Heart left ventricle (tissue), 16 donors: ENCODE measurements at regions of chr3 and their contacts with region 1.

Region 1: DNA sequence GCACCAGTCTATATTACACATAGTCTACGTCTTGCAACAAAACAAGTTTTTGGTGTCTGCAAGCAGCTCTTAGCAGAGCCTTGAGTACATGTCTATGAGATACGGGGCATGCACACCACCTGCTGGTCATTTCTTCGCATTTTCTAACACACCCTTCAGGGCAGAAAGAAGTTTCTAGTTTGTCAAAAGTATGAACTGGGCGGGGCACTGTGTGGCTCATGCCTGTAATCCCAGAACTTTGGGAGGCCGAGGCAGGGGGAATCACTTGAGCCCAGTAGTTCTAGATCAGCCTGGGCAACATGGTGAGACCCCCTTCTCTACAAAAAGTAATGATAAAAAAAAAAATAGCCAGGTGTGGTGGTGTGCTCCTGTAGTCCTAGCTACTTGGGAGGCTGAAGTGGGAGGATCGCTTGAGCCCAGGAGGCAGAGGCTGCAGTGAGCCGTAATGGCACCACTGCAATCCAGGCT is 64.2 kb upstream of the ARL8B start:
- DNase-seq: peak in 4 of 5 donors; percentile 72 to 76 (median 73)
- ATAC-seq: peak; percentile 77 to 91 (median 89)
- H3K4me3 ChIP-seq: no peak overlapping the region
- H3K27ac ChIP-seq: peak overlapping the region in 2 of 12 donors; percentile 10 to 23
- H3K4me1 ChIP-seq: peaks cover 0 to 49% (median 8%) of the 10 kb centered on the region in 12 donors
- H3K27me3 ChIP-seq: no peaks in the 10 kb centered on the region
- CTCF ChIP-seq: peak; percentile 61 to 84 (median 77)
- POLR2A ChIP-seq: no peak

Region 2: GRCh38 chr3:4656059-4656458 is 401.8 kb before region 1 on chr3:
- intact Hi-C with region 1: loop called (anchors 2 to 5 kb)
- DNase-seq: peak; percentile 51 to 70 (median 64)
- ATAC-seq: peak; percentile 76 to 92 (median 90)
- H3K4me3 ChIP-seq: no peak overlapping the region
- H3K27ac ChIP-seq: peak overlapping the region in 6 of 12 donors; percentile 9 to 46 (median 39)
- H3K4me1 ChIP-seq: peaks cover 0 to 15% (median 9%) of the 10 kb centered on the region in 12 donors
- H3K27me3 ChIP-seq: no peaks in the 10 kb centered on the region
- CTCF ChIP-seq: peak; percentile 62 to 90 (median 82)
- POLR2A ChIP-seq: no peak

Region 3: GRCh38 chr3:4722103-4722502 is 335.8 kb before region 1 on chr3:
- intact Hi-C with region 1: loop called in 1 of 10 experiments (anchors 2 kb)
- DNase-seq: peak in 2 of 5 donors; percentile 56 to 60
- ATAC-seq: peak; percentile 59 to 83 (median 74)
- H3K4me3 ChIP-seq: no peak overlapping the region
- H3K27ac ChIP-seq: peak overlapping the region in 9 of 12 donors; percentile 12 to 73 (median 58)
- H3K4me1 ChIP-seq: peaks cover 0 to 66% (median 41%) of the 10 kb centered on the region in 12 donors
- H3K27me3 ChIP-seq: no peaks in the 10 kb centered on the region
- CTCF ChIP-seq: peak in 10 of 12 donors; percentile 37 to 62 (median 48)
- POLR2A ChIP-seq: no peak